ENCODE measurements at regions of chr2 and their contacts with region 1.

Region 1: DNA sequence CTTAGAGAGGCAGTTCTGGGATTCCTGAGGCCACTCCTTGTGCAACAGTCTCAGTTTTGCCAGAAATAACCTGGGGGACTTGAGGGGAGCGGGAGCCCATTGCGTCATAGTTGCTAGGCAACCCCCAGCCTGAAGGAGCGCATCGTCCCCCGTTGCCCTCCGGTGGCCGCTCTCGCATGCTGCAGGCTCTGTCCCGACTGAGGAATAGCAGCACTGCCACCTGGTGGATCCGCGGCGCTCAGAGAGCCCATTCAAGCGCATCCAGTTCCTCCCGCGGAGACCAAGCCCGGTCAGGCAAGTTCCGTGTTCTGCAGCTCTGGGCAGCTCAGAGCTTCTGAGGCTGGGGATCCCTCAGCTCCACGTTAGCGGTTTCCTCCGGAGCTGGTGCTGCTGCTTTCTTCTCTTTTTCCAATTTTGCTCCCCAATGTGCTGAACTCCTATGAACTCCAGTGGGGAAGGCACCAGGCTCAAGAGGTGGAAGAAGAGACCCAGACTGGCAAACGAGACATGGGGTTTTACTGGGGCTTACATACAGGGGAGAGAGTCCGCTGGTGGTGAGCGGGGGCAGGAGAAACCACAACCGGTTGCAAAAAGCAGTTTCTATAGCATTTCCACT is 15.1 kb downstream of the SLC4A3 start:
- DNase-seq: peak; percentile 95 to 98
- H3K4me3 ChIP-seq: no peak overlapping the region
- H3K27ac ChIP-seq: peak overlapping the region in 1 of 5 donors; percentile 50
- H3K4me1 ChIP-seq: peaks cover 0 to 24% (median 15%) of the 10 kb centered on the region in 4 donors
- H3K27me3 ChIP-seq: peaks cover 0 to 4% (median 0%) of the 10 kb centered on the region in 3 donors
- CTCF ChIP-seq: peak in 5 of 7 experiments; percentile 92 to 100 (median 98)
- EP300 ChIP-seq: no peak
- POLR2A ChIP-seq: no peak

Region 2: GRCh38 chr2:219543601-219544358 is 98.8 kb before region 1 on chr2 and contains the starts of genes CHPF and TMEM198:
- intact Hi-C with region 1: loop called (anchors 5 kb)
- DNase-seq: peak; percentile 99
- H3K4me3 ChIP-seq: peak within 1 kb of the TSS; percentile 74 to 88 (median 82)
- H3K27ac ChIP-seq: peak within 1 kb of the TSS; percentile 94 to 97 (median 96)
- H3K4me1 ChIP-seq: peaks cover 26 to 41% (median 36%) of the 10 kb centered on the region in 4 donors
- H3K27me3 ChIP-seq: peaks cover 0 to 26% (median 0%) of the 10 kb centered on the region in 3 donors
- CTCF ChIP-seq: no peak
- EP300 ChIP-seq: no peak
- POLR2A ChIP-seq: peak in 1 of 4 donors; percentile 32
- total RNA-seq, gene CHPF: 28.0 to 119 (median 83.4) TPM
- total RNA-seq, gene TMEM198: 0.92 to 7.5 (median 2.7) TPM in 3 of 5 donors, not detected in the others